ENCODE measurements at regions of chr11 and their contacts with region 1.

Region 1: GRCh38 chr11:12066799-12067508 is 43.4 kb upstream of the MICAL2 start:
- DNase-seq: peak; percentile 49
- H3K4me3 ChIP-seq: no peak overlapping the region
- H3K27ac ChIP-seq: peak overlapping the region; percentile 91
- H3K4me1 ChIP-seq: peaks cover 41% of the 10 kb centered on the region
- H3K27me3 ChIP-seq: no peaks in the 10 kb centered on the region
- CTCF ChIP-seq: no peak

Region 2: DNA sequence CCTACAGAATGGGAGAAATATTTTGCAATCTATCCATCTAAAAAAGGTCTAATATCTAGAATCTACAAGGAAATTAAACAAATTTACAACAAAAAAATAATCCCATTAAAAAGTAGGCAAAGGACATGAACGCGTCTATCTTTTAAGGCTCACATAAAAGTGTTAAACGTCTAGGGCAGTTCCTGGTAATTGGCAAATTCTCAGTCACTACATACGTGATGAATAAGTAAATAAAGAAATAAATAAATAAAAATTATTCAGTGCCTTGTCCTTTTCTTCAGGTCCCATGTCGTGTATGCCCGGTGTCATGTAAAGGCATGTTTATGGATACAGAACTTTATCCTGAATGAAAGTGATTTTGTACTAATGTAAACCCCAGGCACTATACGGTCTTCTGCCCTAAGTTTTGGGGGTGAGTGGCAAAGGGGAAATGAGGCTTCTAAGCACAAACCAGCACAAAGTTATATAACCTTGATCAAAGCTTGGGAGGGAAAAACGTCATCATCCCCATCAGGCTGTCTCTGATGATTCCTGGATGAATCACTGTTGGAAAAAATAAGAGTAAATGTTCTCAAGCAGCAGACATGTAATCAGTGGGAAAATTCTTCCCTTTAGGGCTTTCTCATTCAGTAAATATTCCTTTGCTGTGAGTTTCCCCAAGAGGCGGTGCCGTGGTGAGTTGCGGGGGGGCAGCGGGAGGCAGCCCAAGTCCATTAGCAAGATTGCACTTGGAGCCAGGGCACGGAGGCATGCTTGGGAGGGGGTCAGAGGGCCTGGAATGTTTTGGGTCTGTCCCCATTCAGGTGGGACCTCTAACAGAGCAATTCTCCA is 13.0 kb after region 1 on chr11:
- CTCF ChIA-PET with region 1: no interaction called
- dilution Hi-C with region 1: no loop called
- in situ Hi-C with region 1: no loop called
- intact Hi-C with region 1: loop called (anchors 1 kb)
- DNase-seq: peak; percentile 98
- H3K4me3 ChIP-seq: no peak overlapping the region
- H3K27ac ChIP-seq: peak overlapping the region; percentile 99
- H3K4me1 ChIP-seq: peaks cover 41% of the 10 kb centered on the region
- H3K27me3 ChIP-seq: no peaks in the 10 kb centered on the region
- CTCF ChIP-seq: no peak

Region 3: GRCh38 chr11:12110201-12110713 is 43.3 kb after region 1 on chr11 and contains the start of gene MICAL2:
- CTCF ChIA-PET with region 1: no interaction called
- dilution Hi-C with region 1: no loop called
- in situ Hi-C with region 1: no loop called
- intact Hi-C with region 1: loop called (anchors 1 kb)
- DNase-seq: peak; percentile 95
- H3K4me3 ChIP-seq: peak within 1 kb of the TSS; percentile 60 to 81 (median 76)
- H3K27ac ChIP-seq: peak within 1 kb of the TSS; percentile 95
- H3K4me1 ChIP-seq: peaks cover 37% of the 10 kb centered on the region
- H3K27me3 ChIP-seq: no peaks in the 10 kb centered on the region
- CTCF ChIP-seq: no peak
- total RNA-seq, gene MICAL2: 163 to 339 TPM

Region 4: GRCh38 chr11:12137938-12138731 is 71.2 kb after region 1 on chr11:
- CTCF ChIA-PET with region 1: no interaction called
- dilution Hi-C with region 1: no loop called
- in situ Hi-C with region 1: no loop called
- intact Hi-C with region 1: no loop called
- DNase-seq: peak; percentile 97
- H3K4me3 ChIP-seq: no peak overlapping the region
- H3K27ac ChIP-seq: peak overlapping the region; percentile 84
- H3K4me1 ChIP-seq: peaks cover 51% of the 10 kb centered on the region
- H3K27me3 ChIP-seq: no peaks in the 10 kb centered on the region
- CTCF ChIP-seq: no peak

Region 5: DNA sequence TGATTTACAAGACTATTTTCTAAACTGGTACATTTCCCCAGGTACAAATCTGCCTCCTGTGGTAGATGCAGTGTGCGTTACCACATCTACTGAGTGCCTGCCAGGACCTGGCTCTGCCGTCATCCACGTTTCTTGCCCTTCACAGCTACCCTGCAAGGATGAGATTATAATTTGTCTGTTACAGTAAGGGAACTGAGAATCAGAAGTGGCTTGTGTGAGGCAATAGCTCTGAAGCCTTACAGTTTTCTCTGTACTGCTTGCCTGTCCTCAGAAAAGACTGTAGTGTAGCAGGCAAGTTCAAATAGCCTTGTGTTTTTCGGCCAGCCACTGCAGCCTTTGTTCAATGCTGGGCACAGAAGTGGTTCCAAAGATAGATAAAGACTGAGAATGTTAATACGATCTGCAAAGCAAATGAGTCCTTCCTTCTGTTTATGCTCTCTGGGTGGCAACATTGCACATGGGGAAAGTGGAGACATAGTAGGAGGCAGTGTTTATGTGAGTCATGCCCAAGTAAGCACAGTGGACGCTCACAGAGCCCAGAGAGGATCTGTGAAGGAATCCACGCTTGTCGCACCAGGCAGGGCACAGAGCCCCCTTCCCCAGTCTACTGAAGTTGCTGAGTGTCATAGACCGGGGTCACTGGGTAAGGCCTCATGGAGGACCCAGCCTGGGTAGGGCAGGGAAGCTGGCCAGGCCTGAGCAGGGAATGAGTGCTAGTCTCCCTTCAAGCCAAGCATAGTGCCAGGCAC is 92.6 kb after region 1 on chr11:
- CTCF ChIA-PET with region 1: no interaction called
- dilution Hi-C with region 1: loop called (anchors 5 kb)
- in situ Hi-C with region 1: no loop called
- intact Hi-C with region 1: no loop called
- DNase-seq: peak; percentile 57
- H3K4me3 ChIP-seq: no peak overlapping the region
- H3K27ac ChIP-seq: no peak overlapping the region
- H3K4me1 ChIP-seq: peaks cover 56% of the 10 kb centered on the region
- H3K27me3 ChIP-seq: no peaks in the 10 kb centered on the region
- CTCF ChIP-seq: peak in 1 of 2 donors; percentile 35

Measured in mammary epithelial cell (primary cell).